Left cardiac atrium (tissue), 4 donors: ENCODE measurements at regions of chr7 and their contacts with region 1.

Region 1: GRCh38 chr7:21253740-21254687 is 173.9 kb upstream of the SP4 start:
- DNase-seq: peak; percentile 26
- ATAC-seq: peak; percentile 47 to 70

Region 2: GRCh38 chr7:20458521-20458920 is 795.5 kb before region 1 on chr7:
- intact Hi-C with region 1: no loop called
- DNase-seq: no peak
- ATAC-seq: no peak

Region 3: DNA sequence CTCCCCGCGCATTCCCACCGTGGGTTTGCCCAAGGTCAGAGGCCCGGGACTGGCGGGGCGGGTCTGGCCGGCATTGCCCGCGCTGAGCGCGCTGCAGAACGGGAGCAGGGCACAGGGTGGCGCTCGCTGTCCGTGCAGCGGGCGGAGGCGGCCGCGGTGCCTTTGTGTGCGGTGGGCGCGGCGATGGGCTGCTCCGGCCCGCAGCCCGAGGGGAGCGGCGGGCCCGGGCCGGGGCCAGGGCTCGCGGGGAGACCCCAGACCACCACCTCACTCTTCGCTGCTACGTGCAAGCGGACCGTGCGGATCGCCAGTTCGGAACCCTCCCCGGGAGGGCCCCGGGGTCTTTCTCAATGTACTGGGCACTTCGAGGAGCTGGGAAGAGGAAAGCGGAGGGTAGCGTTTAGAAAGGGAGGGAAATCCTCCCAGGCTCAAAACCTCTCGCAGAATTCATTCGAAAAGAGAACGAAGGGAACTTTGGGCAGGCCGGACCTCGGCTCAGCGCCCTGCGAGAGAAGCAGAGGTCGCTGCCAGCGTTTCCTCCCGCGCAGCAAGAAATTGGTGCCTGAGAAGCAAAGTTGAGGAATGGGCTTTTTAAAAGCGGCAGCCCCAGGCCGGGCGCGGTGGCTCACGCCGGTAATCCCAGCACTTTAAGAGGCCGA is 475.8 kb before region 1 on chr7:
- intact Hi-C with region 1: loop called in 1 of 2 experiments (anchors 5 kb)
- DNase-seq: peak; percentile 32
- ATAC-seq: peak; percentile 95 to 96

Region 4: GRCh38 chr7:21507626-21508343 is 253.8 kb after region 1 on chr7:
- intact Hi-C with region 1: loop called in 1 of 2 experiments (anchors 10 kb)
- DNase-seq: no peak
- ATAC-seq: peak; percentile 57 to 61

Region 5: DNA sequence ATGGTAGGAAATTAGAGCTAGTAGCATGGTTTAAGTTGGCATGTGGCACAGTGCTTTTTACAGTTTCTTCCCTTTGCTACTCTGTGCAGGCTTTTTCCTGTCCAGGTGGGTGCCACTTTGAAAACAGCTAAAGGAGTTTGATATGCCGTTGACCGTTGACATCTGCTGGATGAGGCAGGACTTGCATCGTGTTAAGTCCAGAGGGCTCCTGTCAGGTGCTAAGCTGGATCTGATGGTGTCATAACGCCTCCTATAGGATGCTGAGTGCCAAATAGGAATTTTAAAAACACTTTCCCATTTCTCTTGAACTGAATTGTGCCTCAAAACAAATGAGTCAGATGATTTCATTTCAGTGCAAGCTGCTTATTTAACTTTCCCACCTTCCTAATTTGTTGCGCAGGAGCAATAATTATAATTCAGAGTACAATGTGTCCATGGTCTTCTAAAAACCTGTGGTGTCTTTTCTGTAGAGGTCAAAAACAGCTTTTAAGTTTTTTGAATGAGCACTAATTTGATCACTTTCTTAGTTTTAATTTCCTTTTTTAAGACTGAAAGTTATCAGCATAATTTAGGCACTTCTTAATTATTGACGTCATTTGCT is 513.4 kb after region 1 on chr7:
- intact Hi-C with region 1: loop called in 1 of 2 experiments (anchors 5 kb)
- DNase-seq: peak; percentile 28
- ATAC-seq: peak; percentile 78 to 92

Region 6: DNA sequence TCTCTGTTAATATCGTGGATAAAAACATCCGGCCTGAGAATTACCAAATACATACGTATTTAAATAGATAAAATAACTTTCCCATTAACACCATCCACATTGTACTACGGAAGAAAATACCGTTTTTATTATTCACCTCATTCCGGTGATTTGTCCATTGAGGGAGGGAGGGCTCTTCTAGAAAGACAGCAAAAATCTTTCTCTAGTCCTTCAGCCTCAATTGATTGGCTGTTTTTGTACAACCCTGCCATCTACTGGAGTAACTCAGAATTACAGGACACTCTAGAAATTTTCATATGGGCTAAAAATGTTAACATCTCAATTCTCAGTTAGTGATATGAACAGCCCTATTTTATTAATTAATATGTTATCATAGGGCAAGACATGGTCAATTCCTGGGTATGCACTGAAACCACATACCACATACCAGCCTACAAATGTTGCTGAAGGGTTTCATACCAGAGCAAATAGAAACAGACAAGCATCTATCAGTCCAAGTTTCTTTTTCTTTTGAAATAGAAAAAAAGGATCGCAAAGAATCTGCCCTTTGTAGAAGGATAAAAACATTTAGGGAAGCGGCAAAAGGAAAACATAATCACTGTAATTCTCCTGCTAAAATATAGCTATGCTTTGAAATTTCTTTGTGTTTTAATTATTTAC is 747.5 kb after region 1 on chr7:
- intact Hi-C with region 1: loop called in 1 of 2 experiments (anchors 10 kb)
- DNase-seq: no peak
- ATAC-seq: peak; percentile 74 to 87